GM12878 (cell line): ENCODE measurements at regions of chrX and their contacts with region 1.

Region 1: GRCh38 chrX:131741103-131741581 is 197.3 kb downstream of the OR13H1 start:
- DNase-seq: peak; percentile 87
- ATAC-seq: peak; percentile 83
- H3K4me3 ChIP-seq: peak overlapping the region; percentile 63
- H3K27ac ChIP-seq: peak overlapping the region; percentile 95
- H3K4me1 ChIP-seq: no peaks in the 10 kb centered on the region
- H3K27me3 ChIP-seq: no peaks in the 10 kb centered on the region
- CTCF ChIP-seq: peak; percentile 22 to 54 (median 43); a peak in 5 of 6 replicates
- EP300 ChIP-seq: no peak
- POLR2A ChIP-seq: 0 out of 2 replicates have a peak, but pooled peaks have one; percentile 28
- RAD21 ChIP-seq: peak; percentile 64

Region 2: GRCh38 chrX:131710431-131711045 is 30.6 kb before region 1 on chrX:
- CTCF ChIA-PET with region 1: interaction called, 7 read pairs
- POLR2A ChIA-PET with region 1: no interaction called
- RAD21 ChIA-PET with region 1: interaction called, 16 read pairs
- SMC1A ChIA-PET with region 1: interaction called, 9 read pairs
- in situ Hi-C with region 1: no loop called
- intact Hi-C with region 1: loop called (anchors 1 kb)
- DNase-seq: no peak
- ATAC-seq: 0 out of 3 replicates have a peak, but pooled peaks have one; percentile 21
- H3K4me3 ChIP-seq: no peak overlapping the region
- H3K27ac ChIP-seq: peak overlapping the region; percentile 48
- H3K4me1 ChIP-seq: no peaks in the 10 kb centered on the region
- H3K27me3 ChIP-seq: no peaks in the 10 kb centered on the region
- CTCF ChIP-seq: no peak
- EP300 ChIP-seq: no peak
- POLR2A ChIP-seq: no peak
- RAD21 ChIP-seq: no peak